Heart right ventricle (tissue), 16 donors: ENCODE measurements at regions of chr22 and their contacts with region 1.

Region 1: GRCh38 chr22:17477391-17477833 is 85.9 kb upstream of the SLC25A18 start:
- DNase-seq: peak; percentile 23 to 29
- ATAC-seq: peak; percentile 56 to 95 (median 86)
- H3K4me3 ChIP-seq: peak overlapping the region in 9 of 10 donors; percentile 7 to 48 (median 38)
- H3K27ac ChIP-seq: peak overlapping the region in 7 of 10 donors; percentile 12 to 56 (median 42)
- H3K4me1 ChIP-seq: peaks cover 0 to 33% (median 13%) of the 10 kb centered on the region in 9 donors
- H3K27me3 ChIP-seq: no peaks in the 10 kb centered on the region
- CTCF ChIP-seq: no peak

Region 2: GRCh38 chr22:17436382-17436980 is 40.9 kb before region 1 on chr22:
- intact Hi-C with region 1: loop called in 2 of 10 experiments (anchors 5 kb)
- DNase-seq: peak in 1 of 2 donors; percentile 9
- ATAC-seq: peak in 7 of 8 donors; percentile 16 to 78 (median 55)
- H3K4me3 ChIP-seq: no peak overlapping the region
- H3K27ac ChIP-seq: peak overlapping the region in 3 of 10 donors; percentile 8 to 41 (median 33)
- H3K4me1 ChIP-seq: peaks cover 0 to 33% (median 18%) of the 10 kb centered on the region in 9 donors
- H3K27me3 ChIP-seq: no peaks in the 10 kb centered on the region
- CTCF ChIP-seq: peak in 3 of 9 donors; percentile 8 to 28 (median 11)

Region 3: GRCh38 chr22:17444204-17444504 is 33.3 kb before region 1 on chr22:
- intact Hi-C with region 1: loop called in 3 of 10 experiments (anchors 1 to 5 kb)
- DNase-seq: no peak
- ATAC-seq: no peak
- H3K4me3 ChIP-seq: no peak overlapping the region
- H3K27ac ChIP-seq: no peak overlapping the region
- H3K4me1 ChIP-seq: peaks cover 0 to 11% (median 0%) of the 10 kb centered on the region in 9 donors
- H3K27me3 ChIP-seq: no peaks in the 10 kb centered on the region
- CTCF ChIP-seq: no peak

Region 4: DNA sequence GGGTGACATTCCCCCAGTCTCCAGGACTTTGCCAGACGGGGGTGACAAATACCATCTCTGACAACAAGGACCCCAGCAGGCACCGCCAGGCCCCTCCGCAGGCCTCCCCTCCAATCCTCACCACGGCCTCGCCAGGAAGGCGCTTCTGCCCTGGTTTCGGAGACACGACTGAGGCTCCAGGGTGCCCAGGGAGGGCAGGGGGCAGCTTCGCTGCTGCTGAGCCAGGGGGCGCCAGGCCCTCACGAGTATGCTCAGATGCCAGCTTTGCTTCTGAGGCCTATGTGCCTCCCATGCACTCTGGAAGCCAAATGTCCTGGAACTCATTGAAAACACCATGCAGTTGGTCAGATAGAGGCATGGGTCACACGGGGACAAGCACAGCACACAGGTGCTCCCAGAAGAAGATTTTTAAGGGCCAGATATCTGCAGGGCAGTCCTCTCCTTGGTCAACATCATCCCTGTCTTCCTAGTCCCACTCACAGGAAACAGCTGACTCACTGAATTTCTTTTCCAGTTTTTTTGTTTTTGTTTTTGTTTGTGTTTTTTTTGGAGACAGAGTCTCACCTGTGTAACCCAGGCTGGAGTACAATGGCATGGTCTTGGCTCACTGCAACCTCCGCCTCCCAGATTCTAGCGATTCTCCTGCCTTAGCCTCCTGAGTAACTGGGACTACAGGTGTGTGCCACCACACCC is 277.0 kb after region 1 on chr22:
- intact Hi-C with region 1: no loop called
- DNase-seq: no peak
- ATAC-seq: peak in 7 of 8 donors; percentile 30 to 78 (median 64)
- H3K4me3 ChIP-seq: no peak overlapping the region
- H3K27ac ChIP-seq: no peak overlapping the region
- H3K4me1 ChIP-seq: peaks cover 0 to 5% (median 0%) of the 10 kb centered on the region in 9 donors
- H3K27me3 ChIP-seq: no peaks in the 10 kb centered on the region
- CTCF ChIP-seq: peak in 7 of 9 donors; percentile 22 to 45 (median 36)